Heart right ventricle (tissue), 16 donors: ENCODE measurements at regions of chr5 and their contacts with region 1.

Region 1: GRCh38 chr5:93582677-93583438 is at the start of gene NR2F1:
- DNase-seq: peak in 1 of 2 donors; percentile 36
- ATAC-seq: peak in 4 of 8 donors; percentile 11 to 38 (median 32)
- H3K4me3 ChIP-seq: peak within 1 kb of the TSS; percentile 14 to 54 (median 49)
- H3K27ac ChIP-seq: no peak within 1 kb of the TSS
- H3K4me1 ChIP-seq: peaks cover 6 to 60% (median 41%) of the 10 kb centered on the region in 9 donors
- H3K27me3 ChIP-seq: peaks cover 9 to 89% (median 84%) of the 10 kb centered on the region in 7 donors
- CTCF ChIP-seq: no peak
- total RNA-seq, gene NR2F1: 0.27 to 2.4 (median 0.92) TPM

Region 2: GRCh38 chr5:93289942-93290341 is 292.9 kb before region 1 on chr5:
- intact Hi-C with region 1: no loop called
- DNase-seq: no peak
- ATAC-seq: no peak
- H3K4me3 ChIP-seq: no peak overlapping the region
- H3K27ac ChIP-seq: no peak overlapping the region
- H3K4me1 ChIP-seq: no peaks in the 10 kb centered on the region
- H3K27me3 ChIP-seq: no peaks in the 10 kb centered on the region
- CTCF ChIP-seq: no peak

Region 3: GRCh38 chr5:93476251-93476742 is 106.6 kb before region 1 on chr5:
- intact Hi-C with region 1: no loop called
- DNase-seq: no peak
- ATAC-seq: no peak
- H3K4me3 ChIP-seq: no peak overlapping the region
- H3K27ac ChIP-seq: no peak overlapping the region
- H3K4me1 ChIP-seq: no peaks in the 10 kb centered on the region
- H3K27me3 ChIP-seq: no peaks in the 10 kb centered on the region
- CTCF ChIP-seq: no peak

Region 4: DNA sequence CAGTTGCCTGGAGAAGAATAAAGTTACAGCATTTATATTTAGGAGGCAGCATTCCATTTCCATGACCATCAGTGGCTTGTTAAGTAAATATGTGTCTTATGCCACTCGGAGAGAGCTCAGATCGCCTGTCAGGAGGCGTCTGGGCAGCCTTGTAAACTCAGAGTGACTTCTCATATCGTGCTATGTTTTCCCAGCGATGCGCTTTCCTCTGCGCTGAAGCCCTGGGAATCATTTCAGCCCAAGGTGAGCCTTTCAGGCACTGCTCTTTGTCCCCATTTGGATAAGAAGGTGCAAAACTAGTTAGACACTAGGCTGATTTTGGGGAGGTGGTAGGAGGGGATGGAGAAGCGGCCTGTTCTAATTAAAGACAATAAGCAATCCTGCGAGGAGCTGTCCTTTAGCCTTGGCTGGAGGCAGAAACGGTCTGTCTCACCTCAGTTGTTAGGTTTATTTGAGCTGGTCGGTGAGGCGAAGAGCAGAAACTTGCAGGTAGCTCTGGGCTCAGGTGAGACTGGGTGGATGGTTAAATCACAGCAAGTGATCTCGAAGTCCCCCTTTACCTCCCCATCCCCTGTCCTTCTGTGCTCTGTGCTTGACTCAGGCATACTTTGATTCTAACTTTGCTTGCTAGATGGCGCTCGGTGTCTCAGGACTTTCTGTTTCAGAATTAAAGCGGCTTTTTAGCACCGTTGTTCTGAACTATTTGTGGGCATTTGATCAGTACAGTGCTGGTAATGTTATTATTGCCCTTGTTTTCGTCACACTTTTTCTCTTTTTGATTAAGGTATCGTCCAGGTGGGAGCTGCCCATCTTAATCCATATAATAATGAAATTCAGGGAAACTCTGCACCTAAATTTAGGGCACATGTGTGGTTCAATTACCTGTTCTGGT is 24.8 kb after region 1 on chr5:
- intact Hi-C with region 1: loop called in 1 of 10 experiments (anchors 1 kb)
- DNase-seq: peak in 1 of 2 donors; percentile 45
- ATAC-seq: peak in 7 of 8 donors; percentile 46 to 79 (median 73)
- H3K4me3 ChIP-seq: no peak overlapping the region
- H3K27ac ChIP-seq: no peak overlapping the region
- H3K4me1 ChIP-seq: peaks cover 0 to 20% (median 14%) of the 10 kb centered on the region in 9 donors
- H3K27me3 ChIP-seq: peaks cover 23 to 100% (median 98%) of the 10 kb centered on the region in 7 donors
- CTCF ChIP-seq: peak in 8 of 9 donors; percentile 8 to 66 (median 54)

Region 5: DNA sequence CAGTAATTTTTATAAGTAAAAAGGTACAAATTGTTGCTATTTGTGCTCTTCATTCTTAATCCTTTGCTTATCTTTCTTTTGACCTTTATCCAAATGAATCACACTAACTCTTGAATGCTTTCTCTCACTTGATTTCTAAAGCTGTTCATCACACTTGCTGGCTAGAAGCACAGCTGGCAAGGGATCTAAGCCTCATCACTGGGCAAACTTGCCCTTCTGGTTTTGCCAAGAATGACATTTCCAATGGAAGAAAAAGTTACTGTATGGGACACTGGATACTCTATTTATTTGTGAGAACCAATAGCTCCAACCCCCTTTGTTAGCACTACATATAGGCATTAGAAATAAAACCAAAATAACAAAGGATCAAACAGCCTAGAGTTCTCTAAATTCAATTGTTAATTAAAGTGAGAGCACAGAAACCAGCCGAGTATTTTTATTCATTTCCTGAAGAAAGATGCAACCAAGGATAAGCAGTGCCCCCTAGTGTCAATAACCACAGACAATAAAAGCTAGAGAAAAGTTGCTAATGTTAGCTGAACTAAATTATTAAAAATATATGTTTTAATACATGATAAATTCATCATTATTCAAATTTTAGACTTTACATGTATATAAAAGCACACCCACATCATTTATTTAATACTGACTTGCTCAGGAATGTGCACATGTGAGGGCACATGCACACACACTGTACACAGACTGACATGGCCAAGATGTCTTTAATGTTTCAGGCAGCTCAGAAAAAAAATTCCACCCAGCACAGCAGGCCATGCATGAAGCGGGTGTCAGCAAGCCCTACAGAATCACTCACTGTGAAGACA is 218.3 kb after region 1 on chr5:
- intact Hi-C with region 1: loop called in 4 of 10 experiments (anchors 1 to 10 kb)
- DNase-seq: peak in 1 of 2 donors; percentile 16
- ATAC-seq: peak in 1 of 8 donors; percentile 51
- H3K4me3 ChIP-seq: no peak overlapping the region
- H3K27ac ChIP-seq: no peak overlapping the region
- H3K4me1 ChIP-seq: peaks cover 0 to 9% (median 5%) of the 10 kb centered on the region in 9 donors
- H3K27me3 ChIP-seq: no peaks in the 10 kb centered on the region
- CTCF ChIP-seq: peak; percentile 41 to 81 (median 76)

Region 6: DNA sequence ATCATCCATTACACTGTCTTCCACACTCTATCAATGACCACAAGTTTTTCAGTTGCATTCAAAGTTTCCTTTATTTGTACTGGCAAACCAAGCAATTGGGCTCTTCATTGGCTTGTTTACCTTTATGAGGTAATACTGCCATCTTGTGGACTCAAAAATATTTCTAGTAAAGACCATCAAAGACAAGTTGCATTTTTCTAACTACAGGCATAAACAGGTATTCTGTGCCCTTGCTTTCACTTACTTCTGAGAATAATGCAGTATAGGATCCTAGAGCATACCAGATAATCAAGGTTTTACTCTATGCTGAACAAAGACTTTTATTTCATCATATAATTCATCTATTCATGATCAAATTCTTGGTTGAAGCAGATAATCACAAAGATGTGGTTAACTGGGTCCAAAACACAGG is 332.3 kb after region 1 on chr5:
- intact Hi-C with region 1: loop called in 5 of 10 experiments (anchors 2 to 10 kb)
- DNase-seq: no peak
- ATAC-seq: no peak
- H3K4me3 ChIP-seq: no peak overlapping the region
- H3K27ac ChIP-seq: no peak overlapping the region
- H3K4me1 ChIP-seq: no peaks in the 10 kb centered on the region
- H3K27me3 ChIP-seq: no peaks in the 10 kb centered on the region
- CTCF ChIP-seq: peak in 8 of 9 donors; percentile 22 to 63 (median 55)

Region 7: GRCh38 chr5:94693043-94693822 is 1110.4 kb after region 1 on chr5:
- intact Hi-C with region 1: loop called in 1 of 10 experiments (anchors 10 kb)
- DNase-seq: no peak
- ATAC-seq: peak in 5 of 8 donors; percentile 49 to 79 (median 62)
- H3K4me3 ChIP-seq: no peak overlapping the region
- H3K27ac ChIP-seq: peak overlapping the region in 1 of 10 donors; percentile 35
- H3K4me1 ChIP-seq: peaks cover 0 to 20% (median 5%) of the 10 kb centered on the region in 9 donors
- H3K27me3 ChIP-seq: no peaks in the 10 kb centered on the region
- CTCF ChIP-seq: peak in 8 of 9 donors; percentile 7 to 58 (median 44)